PC-9 (cell line): ENCODE measurements at regions of chr18 and their contacts with region 1.

Region 1: DNA sequence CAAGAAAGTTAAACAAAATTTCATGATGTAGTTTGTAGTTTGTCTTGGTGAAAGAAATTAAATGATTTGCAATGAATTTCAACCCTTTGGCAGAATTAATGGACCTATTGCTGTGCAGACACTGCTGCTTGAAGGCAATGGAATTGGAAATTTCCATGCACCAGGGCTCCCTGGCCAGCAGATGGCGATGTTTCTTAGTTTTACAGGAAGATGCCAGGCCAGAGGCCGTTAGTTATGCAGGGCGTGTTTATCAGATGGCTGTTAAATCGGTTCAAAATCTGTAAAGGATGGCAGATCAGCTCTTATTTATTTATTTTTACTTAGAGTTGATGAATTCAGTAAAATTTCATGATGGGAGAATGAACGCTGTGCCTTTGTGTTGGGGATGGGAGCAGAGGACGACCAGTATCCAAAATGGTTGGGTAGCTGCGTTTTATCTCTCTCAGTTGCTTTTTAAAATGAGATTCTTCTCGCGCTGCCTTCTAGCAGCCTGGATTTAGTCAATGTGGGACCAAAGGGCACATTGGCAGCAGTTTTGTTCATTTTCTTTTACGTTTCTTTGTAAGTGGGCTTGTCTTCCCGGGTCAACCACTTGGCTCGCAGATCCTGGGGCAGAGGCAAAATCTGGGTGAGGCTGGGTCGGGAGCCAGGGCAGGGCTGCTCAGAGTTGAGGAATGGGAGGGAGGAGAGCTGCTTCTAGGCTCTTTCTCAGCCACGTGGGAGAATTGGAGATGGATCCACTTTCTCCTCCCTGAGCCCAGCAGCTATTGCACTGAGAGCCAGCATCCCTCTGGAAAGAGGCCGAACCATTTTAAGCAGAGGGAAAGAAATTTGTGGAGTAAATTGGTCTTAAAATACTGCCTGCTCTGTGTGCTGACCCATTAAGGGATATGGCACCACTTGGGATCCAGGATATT is 344.0 kb downstream of the PIK3C3 start:
- DNase-seq: peak in 1 of 2 experiments; percentile 23
- H3K4me3 ChIP-seq: no peak overlapping the region
- H3K27ac ChIP-seq: no peak overlapping the region
- H3K4me1 ChIP-seq: no peaks in the 10 kb centered on the region
- H3K27me3 ChIP-seq: no peaks in the 10 kb centered on the region
- CTCF ChIP-seq: peak; percentile 77

Region 2: DNA sequence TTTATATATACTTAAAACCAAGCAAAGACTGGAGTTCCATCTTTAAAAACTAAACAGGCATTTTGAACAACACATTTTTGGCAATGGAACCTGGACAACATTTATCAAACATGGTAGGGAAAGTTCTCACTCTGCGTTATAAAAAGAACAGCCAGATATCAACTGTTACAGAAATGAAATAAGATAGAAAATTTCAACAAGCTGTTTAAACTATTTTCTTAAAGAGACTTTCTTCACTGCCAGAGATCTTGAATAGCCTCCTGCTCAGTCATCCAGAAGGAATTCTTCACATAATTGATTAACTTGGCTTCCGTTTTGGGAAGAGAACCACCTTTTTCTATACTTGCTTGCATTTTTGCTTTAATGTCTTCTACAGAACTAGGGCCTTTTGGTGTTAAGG is 510.0 kb before region 1 on chr18:
- CTCF ChIA-PET with region 1: no interaction called
- POLR2A ChIA-PET with region 1: no interaction called
- intact Hi-C with region 1: no loop called
- DNase-seq: no peak
- H3K4me3 ChIP-seq: no peak overlapping the region
- H3K27ac ChIP-seq: no peak overlapping the region
- H3K4me1 ChIP-seq: no peaks in the 10 kb centered on the region
- H3K27me3 ChIP-seq: no peaks in the 10 kb centered on the region
- CTCF ChIP-seq: no peak

Region 3: GRCh38 chr18:43271593-43272432 is 972.8 kb after region 1 on chr18:
- CTCF ChIA-PET with region 1: no interaction called
- POLR2A ChIA-PET with region 1: no interaction called
- intact Hi-C with region 1: loop called (anchors 5 kb)
- DNase-seq: peak in 1 of 2 experiments; percentile 6
- H3K4me3 ChIP-seq: no peak overlapping the region
- H3K27ac ChIP-seq: no peak overlapping the region
- H3K4me1 ChIP-seq: no peaks in the 10 kb centered on the region
- H3K27me3 ChIP-seq: no peaks in the 10 kb centered on the region
- CTCF ChIP-seq: peak; percentile 78

Region 4: GRCh38 chr18:43396266-43396665 is 1097.2 kb after region 1 on chr18:
- CTCF ChIA-PET with region 1: no interaction called
- POLR2A ChIA-PET with region 1: no interaction called
- intact Hi-C with region 1: loop called (anchors 10 kb)
- DNase-seq: no peak
- H3K4me3 ChIP-seq: no peak overlapping the region
- H3K27ac ChIP-seq: no peak overlapping the region
- H3K4me1 ChIP-seq: no peaks in the 10 kb centered on the region
- H3K27me3 ChIP-seq: no peaks in the 10 kb centered on the region
- CTCF ChIP-seq: peak; percentile 49